Dorsolateral prefrontal cortex (tissue), 120 donors: ENCODE measurements at regions of chr1 and their contacts with region 1.

Region 1: GRCh38 chr1:242506724-242507123 is 17.8 kb downstream of the PLD5 start:
- DNase-seq: no peak
- H3K4me3 ChIP-seq: no peak overlapping the region
- H3K27ac ChIP-seq: no peak overlapping the region
- H3K27me3 ChIP-seq: no peaks in the 10 kb centered on the region
- CTCF ChIP-seq: no peak

Region 2: GRCh38 chr1:242477944-242478343 is 28.8 kb before region 1 on chr1:
- intact Hi-C with region 1: loop called in 1 of 2 experiments (anchors 5 kb)
- DNase-seq: no peak
- H3K4me3 ChIP-seq: no peak overlapping the region
- H3K27ac ChIP-seq: no peak overlapping the region
- H3K27me3 ChIP-seq: peaks cover 0 to 5% (median 0%) of the 10 kb centered on the region in 45 donors
- CTCF ChIP-seq: no peak